ENCODE measurements at regions of chr11 and their contacts with region 1.

Region 1: GRCh38 chr11:2151500-2152257 is 9.3 kb downstream of the INS start:
- DNase-seq: peak; percentile 48 to 77
- ATAC-seq: peak; percentile 71 to 73
- H3K4me3 ChIP-seq: no peak overlapping the region
- H3K27ac ChIP-seq: peak overlapping the region; percentile 28 to 52 (median 38)
- H3K4me1 ChIP-seq: peaks cover 9 to 20% of the 10 kb centered on the region in 2 donors
- H3K27me3 ChIP-seq: peaks cover 0 to 7% (median 0%) of the 10 kb centered on the region in 3 donors
- CTCF ChIP-seq: peak; percentile 72 to 97 (median 93)
- POLR2A ChIP-seq: no peak

Region 2: GRCh38 chr11:1652771-1653540 is 498.7 kb before region 1 on chr11:
- in situ Hi-C with region 1: loop called in 1 of 4 experiments (anchors 25 kb)
- intact Hi-C with region 1: no loop called
- DNase-seq: peak; percentile 29 to 52
- ATAC-seq: peak; percentile 66 to 80
- H3K4me3 ChIP-seq: no peak overlapping the region
- H3K27ac ChIP-seq: no peak overlapping the region
- H3K4me1 ChIP-seq: no peaks in the 10 kb centered on the region
- H3K27me3 ChIP-seq: no peaks in the 10 kb centered on the region
- CTCF ChIP-seq: peak; percentile 84 to 99 (median 96)
- POLR2A ChIP-seq: no peak

Region 3: DNA sequence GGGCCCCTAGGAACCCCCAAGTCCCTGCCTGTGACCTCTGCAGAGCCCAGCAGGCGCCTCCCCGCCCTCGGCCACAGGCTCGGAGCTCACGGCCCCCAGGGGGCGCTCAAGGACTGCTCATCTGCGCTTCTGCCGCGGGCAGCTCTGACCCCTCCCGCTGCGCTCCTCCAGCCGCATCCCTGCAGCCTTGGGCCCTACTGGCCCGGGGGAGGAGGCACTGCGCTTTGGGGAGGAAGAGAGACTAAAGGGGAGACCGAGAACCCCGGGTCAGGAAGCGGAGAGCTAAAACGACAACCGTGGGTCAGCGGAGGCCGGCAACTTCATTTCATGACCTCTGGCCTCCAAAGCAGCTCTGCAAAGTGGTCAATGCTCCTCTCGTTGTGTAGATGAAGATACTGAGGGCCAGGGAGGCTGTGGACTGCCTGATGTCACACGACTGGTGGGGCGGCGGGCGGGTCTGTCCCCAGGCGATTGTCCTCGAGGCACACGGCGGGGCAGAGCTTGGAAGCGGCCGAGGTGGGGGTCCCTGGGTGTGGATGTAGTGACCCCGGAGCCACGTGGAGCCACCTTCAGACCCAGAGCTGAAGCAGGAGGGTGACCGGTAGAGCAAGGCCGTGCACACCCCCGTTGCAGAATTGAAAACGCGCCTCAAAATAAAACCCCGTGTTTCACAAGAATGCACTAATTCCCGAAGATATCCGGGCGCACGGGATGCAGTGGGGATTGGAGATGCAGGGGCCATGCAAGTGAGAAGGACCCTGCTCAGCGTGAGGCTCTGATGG is 457.4 kb before region 1 on chr11:
- in situ Hi-C with region 1: loop called in 3 of 4 experiments (anchors 5 to 25 kb)
- intact Hi-C with region 1: loop called (anchors 1 kb)
- DNase-seq: peak; percentile 50 to 67
- ATAC-seq: peak; percentile 87 to 92
- H3K4me3 ChIP-seq: peak overlapping the region in 3 of 4 donors; percentile 26 to 45 (median 27)
- H3K27ac ChIP-seq: peak overlapping the region in 1 of 4 donors; percentile 43
- H3K4me1 ChIP-seq: peaks cover 5 to 7% of the 10 kb centered on the region in 2 donors
- H3K27me3 ChIP-seq: no peaks in the 10 kb centered on the region
- CTCF ChIP-seq: peak; percentile 84 to 97 (median 95)
- POLR2A ChIP-seq: no peak

Region 4: DNA sequence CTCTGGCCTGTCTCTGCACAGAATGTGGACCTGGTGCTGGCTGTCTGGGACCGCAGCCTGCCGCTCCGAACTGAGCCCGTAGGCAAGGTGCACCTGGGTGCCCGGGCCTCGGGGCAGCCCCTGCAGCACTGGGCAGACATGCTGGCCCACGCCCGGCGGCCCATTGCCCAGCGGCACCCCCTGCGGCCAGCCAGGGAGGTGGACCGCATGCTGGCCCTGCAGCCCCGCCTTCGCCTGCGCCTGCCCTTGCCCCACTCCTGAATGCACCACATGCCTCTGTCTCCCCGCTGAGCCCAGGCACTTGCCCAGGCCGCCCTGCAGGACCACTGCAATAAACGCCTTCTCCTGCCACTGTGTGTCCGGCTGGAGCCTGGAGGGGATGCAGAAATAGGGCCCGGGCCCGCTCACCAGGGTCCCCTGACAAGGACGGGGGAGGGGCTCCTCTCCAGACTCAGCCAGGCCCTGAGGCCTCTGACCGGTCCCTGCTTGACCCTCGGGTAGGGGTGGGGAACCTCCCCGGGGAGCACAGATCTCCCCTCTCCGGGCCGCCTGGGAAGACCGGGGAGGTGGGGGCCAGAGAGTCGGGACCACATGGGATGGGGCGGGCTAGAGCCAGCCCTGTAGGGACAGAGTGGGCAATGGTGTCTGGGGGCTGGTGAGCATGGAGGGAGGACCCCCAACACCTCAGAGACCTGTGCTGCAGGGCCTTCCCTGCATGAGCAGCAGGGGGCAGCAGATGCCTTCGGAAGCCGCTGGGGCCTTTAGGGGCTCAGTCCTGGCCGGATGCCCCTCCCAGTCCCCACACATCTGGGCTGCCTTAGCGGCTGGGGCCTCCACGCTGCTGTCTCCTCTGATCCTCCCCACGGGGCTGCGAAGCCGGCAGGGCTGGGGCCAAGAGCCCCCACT is 314.3 kb before region 1 on chr11:
- in situ Hi-C with region 1: no loop called
- intact Hi-C with region 1: loop called (anchors 1 kb)
- DNase-seq: peak in 1 of 2 donors; percentile 65
- ATAC-seq: peak in 1 of 2 donors; percentile 13
- H3K4me3 ChIP-seq: no peak overlapping the region
- H3K27ac ChIP-seq: peak overlapping the region; percentile 88 to 95 (median 92)
- H3K4me1 ChIP-seq: peaks cover 0 to 28% of the 10 kb centered on the region in 2 donors
- H3K27me3 ChIP-seq: no peaks in the 10 kb centered on the region
- CTCF ChIP-seq: peak; percentile 84 to 92 (median 88)
- POLR2A ChIP-seq: no peak

Region 5: DNA sequence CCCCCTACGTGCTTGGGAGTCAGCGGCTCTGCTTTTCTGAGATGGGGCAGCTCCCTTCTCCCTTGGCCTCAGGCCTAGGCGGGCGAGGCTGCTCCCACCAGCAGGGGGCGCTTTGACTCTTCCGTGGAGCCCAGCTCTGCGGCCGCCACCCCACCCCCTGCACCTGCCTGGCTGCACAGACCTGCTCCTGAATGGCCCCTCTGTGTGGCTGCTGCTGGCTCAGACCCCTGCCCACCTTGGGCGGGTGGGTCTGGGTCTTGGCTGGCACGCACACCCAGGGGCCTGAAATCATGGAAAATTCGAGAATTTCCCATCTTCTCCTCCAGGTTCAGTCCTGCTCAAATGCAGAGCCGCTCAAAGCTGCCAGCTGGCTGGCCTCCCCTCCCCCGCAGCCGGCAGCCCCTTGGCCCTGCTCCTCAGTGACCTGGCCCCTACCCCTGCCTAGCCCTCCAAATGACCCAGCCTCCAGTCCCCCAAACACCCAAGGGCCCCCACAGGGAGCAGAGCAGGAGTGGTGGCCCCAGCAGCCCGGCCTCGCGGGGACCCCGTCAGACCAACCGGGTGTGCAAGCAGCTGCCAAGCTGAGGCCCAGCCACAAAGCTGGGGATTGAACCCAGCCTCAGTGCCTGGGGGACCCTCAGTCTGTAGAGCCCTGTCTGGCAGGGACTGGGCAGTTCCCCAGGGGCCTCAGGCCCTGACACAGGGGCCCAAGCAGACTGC is 269.0 kb before region 1 on chr11:
- in situ Hi-C with region 1: loop called in 1 of 4 experiments (anchors 25 kb)
- intact Hi-C with region 1: loop called (anchors 1 kb)
- DNase-seq: peak; percentile 59 to 81
- ATAC-seq: peak; percentile 85 to 91
- H3K4me3 ChIP-seq: no peak overlapping the region
- H3K27ac ChIP-seq: peak overlapping the region; percentile 84 to 89 (median 88)
- H3K4me1 ChIP-seq: peaks cover 31% of the 10 kb centered on the region in 2 donors
- H3K27me3 ChIP-seq: no peaks in the 10 kb centered on the region
- CTCF ChIP-seq: peak; percentile 86 to 98 (median 97)
- POLR2A ChIP-seq: no peak

Region 6: GRCh38 chr11:2036863-2037486 is 114.7 kb before region 1 on chr11:
- in situ Hi-C with region 1: loop called in 1 of 4 experiments (anchors 25 kb)
- intact Hi-C with region 1: no loop called
- DNase-seq: no peak
- ATAC-seq: peak; percentile 56 to 76
- H3K4me3 ChIP-seq: no peak overlapping the region
- H3K27ac ChIP-seq: no peak overlapping the region
- H3K4me1 ChIP-seq: no peaks in the 10 kb centered on the region
- H3K27me3 ChIP-seq: no peaks in the 10 kb centered on the region
- CTCF ChIP-seq: no peak
- POLR2A ChIP-seq: no peak

Region 7: GRCh38 chr11:2092956-2093412 is 58.7 kb before region 1 on chr11:
- in situ Hi-C with region 1: no loop called
- intact Hi-C with region 1: loop called (anchors 2 kb)
- DNase-seq: peak; percentile 93 to 98
- ATAC-seq: peak; percentile 74 to 76
- H3K4me3 ChIP-seq: no peak overlapping the region
- H3K27ac ChIP-seq: peak overlapping the region; percentile 60 to 90 (median 74)
- H3K4me1 ChIP-seq: peaks cover 20 to 27% of the 10 kb centered on the region in 2 donors
- H3K27me3 ChIP-seq: no peaks in the 10 kb centered on the region
- CTCF ChIP-seq: no peak
- POLR2A ChIP-seq: no peak

Region 8: GRCh38 chr11:2217211-2218030 is 65.7 kb after region 1 on chr11:
- in situ Hi-C with region 1: no loop called
- intact Hi-C with region 1: no loop called
- DNase-seq: no peak
- ATAC-seq: no peak
- H3K4me3 ChIP-seq: no peak overlapping the region
- H3K27ac ChIP-seq: no peak overlapping the region
- H3K4me1 ChIP-seq: no peaks in the 10 kb centered on the region
- H3K27me3 ChIP-seq: peaks cover 0 to 15% (median 14%) of the 10 kb centered on the region in 3 donors
- CTCF ChIP-seq: no peak
- POLR2A ChIP-seq: no peak

Measured in gastrocnemius medialis (tissue), 4 donors.